Psoas muscle (tissue), 8 donors: ENCODE measurements at regions of chr10 and their contacts with region 1.

Region 1: GRCh38 chr10:69237528-69238159 is 17.5 kb downstream of the HKDC1 start:
- DNase-seq: peak; percentile 85 to 93
- ATAC-seq: peak; percentile 96 to 100 (median 100)
- H3K4me3 ChIP-seq: no peak overlapping the region
- H3K27ac ChIP-seq: no peak overlapping the region
- H3K4me1 ChIP-seq: peaks cover 5% of the 10 kb centered on the region
- H3K27me3 ChIP-seq: no peaks in the 10 kb centered on the region
- CTCF ChIP-seq: peak; percentile 97

Region 2: GRCh38 chr10:69318106-69318866 is 80.6 kb after region 1 on chr10:
- intact Hi-C with region 1: loop called in 1 of 2 experiments (anchors 5 kb)
- DNase-seq: peak; percentile 91 to 96
- ATAC-seq: peak; percentile 92 to 96 (median 93)
- H3K4me3 ChIP-seq: peak overlapping the region; percentile 95
- H3K27ac ChIP-seq: peak overlapping the region; percentile 92
- H3K4me1 ChIP-seq: peaks cover 38% of the 10 kb centered on the region
- H3K27me3 ChIP-seq: no peaks in the 10 kb centered on the region
- CTCF ChIP-seq: no peak

Region 3: DNA sequence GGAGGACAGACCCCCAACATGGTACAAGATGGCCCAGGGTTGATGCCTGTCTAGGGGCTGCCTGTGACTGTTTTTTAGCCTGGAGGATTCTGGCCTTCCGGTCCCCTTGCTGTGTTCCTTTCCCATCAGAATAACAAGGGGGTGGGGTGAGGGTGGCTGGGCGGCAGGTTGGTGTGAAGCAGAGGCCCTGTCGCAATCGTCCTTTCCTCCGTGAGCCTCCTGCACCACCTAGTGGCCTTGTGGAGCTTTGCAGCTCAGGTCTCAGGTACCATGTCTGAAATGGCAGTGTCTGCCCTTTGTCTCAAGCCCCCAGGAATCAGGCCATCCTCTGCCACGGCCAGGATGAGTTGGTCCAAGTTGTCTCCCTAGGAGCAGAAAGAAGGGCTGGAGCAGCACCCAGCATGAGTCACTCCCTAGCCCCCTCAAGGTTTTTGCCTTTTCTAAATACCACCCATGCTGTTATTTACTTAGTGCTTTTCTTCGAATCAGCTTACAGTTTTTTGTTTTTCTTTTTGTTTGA is 154.9 kb after region 1 on chr10:
- intact Hi-C with region 1: loop called (anchors 1 kb)
- DNase-seq: peak; percentile 82 to 91
- ATAC-seq: peak; percentile 92 to 97 (median 94)
- H3K4me3 ChIP-seq: no peak overlapping the region
- H3K27ac ChIP-seq: peak overlapping the region; percentile 15
- H3K4me1 ChIP-seq: peaks cover 11% of the 10 kb centered on the region
- H3K27me3 ChIP-seq: no peaks in the 10 kb centered on the region
- CTCF ChIP-seq: peak; percentile 94

Region 4: GRCh38 chr10:69408318-69409175 is 170.9 kb after region 1 on chr10:
- intact Hi-C with region 1: loop called in 1 of 2 experiments (anchors 5 kb)
- DNase-seq: peak; percentile 94 to 98
- ATAC-seq: peak; percentile 84 to 89 (median 88)
- H3K4me3 ChIP-seq: peak overlapping the region; percentile 58
- H3K27ac ChIP-seq: peak overlapping the region; percentile 92
- H3K4me1 ChIP-seq: peaks cover 21% of the 10 kb centered on the region
- H3K27me3 ChIP-seq: no peaks in the 10 kb centered on the region
- CTCF ChIP-seq: peak; percentile 84

Region 5: DNA sequence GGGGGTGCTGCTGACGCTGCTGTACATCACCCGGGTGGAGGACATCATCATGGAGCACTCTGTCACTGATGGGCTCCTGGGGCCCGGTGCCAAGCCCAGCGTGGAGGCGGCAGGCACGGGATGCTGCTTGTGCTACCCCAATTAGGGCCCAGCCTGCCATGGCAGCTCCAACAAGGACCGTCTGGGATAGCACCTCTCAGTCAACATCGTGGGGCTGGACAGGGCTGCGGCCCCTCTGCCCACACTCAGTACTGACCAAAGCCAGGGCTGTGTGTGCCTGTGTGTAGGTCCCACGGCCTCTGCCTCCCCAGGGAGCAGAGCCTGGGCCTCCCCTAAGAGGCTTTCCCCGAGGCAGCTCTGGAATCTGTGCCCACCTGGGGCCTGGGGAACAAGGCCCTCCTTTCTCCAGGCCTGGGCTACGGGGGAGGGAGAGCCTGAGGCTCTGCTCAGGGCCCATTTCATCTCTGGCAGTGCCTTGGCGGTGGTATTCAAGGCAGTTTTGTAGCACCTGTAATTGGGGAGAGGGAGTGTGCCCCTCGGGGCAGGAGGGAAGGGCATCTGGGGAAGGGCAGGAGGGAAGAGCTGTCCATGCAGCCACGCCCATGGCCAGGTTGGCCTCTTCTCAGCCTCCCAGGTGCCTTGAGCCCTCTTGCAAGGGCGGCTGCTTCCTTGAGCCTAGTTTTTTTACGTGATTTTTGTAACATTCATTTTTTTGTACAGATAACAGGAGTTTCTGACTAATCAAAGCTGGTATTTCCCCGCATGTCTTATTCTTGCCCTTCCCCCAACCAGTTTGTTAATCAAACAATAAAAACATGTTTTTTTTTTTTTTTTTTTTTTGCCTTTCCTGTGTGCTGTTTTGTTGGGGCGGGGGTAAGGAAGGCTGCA is 269.4 kb after region 1 on chr10:
- intact Hi-C with region 1: loop called (anchors 10 kb)
- DNase-seq: no peak
- ATAC-seq: peak in 2 of 4 donors; percentile 12 to 25
- H3K4me3 ChIP-seq: peak overlapping the region; percentile 42
- H3K27ac ChIP-seq: peak overlapping the region; percentile 67
- H3K4me1 ChIP-seq: peaks cover 45% of the 10 kb centered on the region
- H3K27me3 ChIP-seq: no peaks in the 10 kb centered on the region
- CTCF ChIP-seq: no peak

Region 6: GRCh38 chr10:69639291-69640195 is 401.9 kb after region 1 on chr10:
- intact Hi-C with region 1: loop called in 1 of 2 experiments (anchors 10 kb)
- DNase-seq: peak; percentile 41 to 67
- ATAC-seq: peak; percentile 63 to 81 (median 69)
- H3K4me3 ChIP-seq: no peak overlapping the region
- H3K27ac ChIP-seq: no peak overlapping the region
- H3K4me1 ChIP-seq: no peaks in the 10 kb centered on the region
- H3K27me3 ChIP-seq: peaks cover 0 to 1% (median 0%) of the 10 kb centered on the region in 3 donors
- CTCF ChIP-seq: peak; percentile 81